ENCODE measurements at regions of chr4 and their contacts with region 1.

Region 1: DNA sequence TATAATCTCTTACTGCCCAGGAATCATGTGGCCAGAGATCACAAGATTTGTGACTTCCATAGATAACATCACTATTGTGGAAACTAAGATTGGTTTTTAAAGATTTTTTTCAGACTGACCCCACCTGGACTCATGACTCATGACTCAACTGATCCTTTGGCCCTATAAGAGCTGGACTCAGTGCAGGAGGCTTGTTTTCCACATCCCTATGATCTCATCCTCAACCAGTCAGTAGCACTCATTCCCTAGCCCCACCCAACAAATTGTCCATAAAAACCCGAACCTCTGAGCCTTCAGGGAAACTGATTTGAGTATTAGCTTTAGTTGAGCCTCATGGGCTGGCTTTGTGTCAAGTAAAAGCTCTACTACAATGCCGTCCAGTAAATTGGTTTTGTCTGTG is 7.9 kb upstream of the NOCT start:
- DNase-seq: no peak
- ATAC-seq: no peak
- H3K4me3 ChIP-seq: no peak overlapping the region
- H3K27ac ChIP-seq: no peak overlapping the region
- H3K4me1 ChIP-seq: 0 out of 2 replicates have a peak, but pooled peaks cover 3% of the 10 kb centered on the region
- H3K27me3 ChIP-seq: no peaks in the 10 kb centered on the region
- CTCF ChIP-seq: no peak

Region 2: DNA sequence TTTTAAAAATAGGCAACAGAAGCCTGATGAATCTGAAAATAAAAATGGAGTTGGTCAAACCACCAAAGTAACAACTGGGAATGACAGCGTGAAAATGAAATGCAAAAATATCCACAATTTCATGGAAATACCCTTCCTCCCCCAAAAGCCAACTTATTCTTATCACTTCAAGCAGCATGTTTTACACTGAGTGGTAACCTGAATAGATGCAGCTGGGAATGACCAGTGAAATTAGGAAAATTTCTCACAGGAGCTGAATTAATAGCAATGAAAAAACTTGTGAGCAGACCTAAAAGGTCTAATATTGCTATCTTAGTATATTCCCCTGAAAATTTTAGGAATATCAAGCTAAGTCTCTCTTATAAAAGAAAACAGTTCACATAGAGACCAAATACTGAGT is 1714.4 kb before region 1 on chr4:
- CTCF ChIA-PET with region 1: no interaction called
- POLR2A ChIA-PET with region 1: interaction called, 16 read pairs
- in situ Hi-C with region 1: no loop called
- intact Hi-C with region 1: no loop called
- DNase-seq: no peak
- ATAC-seq: no peak
- H3K4me3 ChIP-seq: no peak overlapping the region
- H3K27ac ChIP-seq: 0 out of 2 replicates have a peak overlapping the region, but pooled peaks have one; percentile 23
- H3K4me1 ChIP-seq: no peaks in the 10 kb centered on the region; the same call in 1 of the 2 replicates
- H3K27me3 ChIP-seq: no peaks in the 10 kb centered on the region
- CTCF ChIP-seq: no peak

Region 3: DNA sequence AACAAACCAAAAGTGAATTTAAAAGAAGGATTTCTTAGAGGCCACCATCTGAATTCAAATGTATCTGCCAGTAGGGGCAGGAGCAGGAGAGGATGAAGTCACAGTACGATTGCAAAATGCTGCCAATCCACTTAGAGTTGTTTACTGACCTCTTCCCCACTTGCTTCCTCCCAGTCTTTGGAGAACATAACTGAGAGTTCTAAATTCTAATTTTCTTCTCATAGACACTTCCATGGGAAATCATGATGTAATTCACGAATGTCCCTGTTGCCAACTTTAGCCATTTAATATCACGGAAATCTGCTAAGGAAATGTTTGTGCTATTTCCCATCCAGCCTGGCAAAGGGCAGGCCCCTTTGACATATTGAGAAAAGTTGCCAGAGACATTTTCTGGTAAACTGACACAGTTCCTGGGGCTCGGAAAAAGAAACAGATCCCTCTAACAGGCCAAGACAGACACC is 25.7 kb before region 1 on chr4:
- CTCF ChIA-PET with region 1: no interaction called
- POLR2A ChIA-PET with region 1: interaction called, 13 read pairs
- in situ Hi-C with region 1: no loop called
- intact Hi-C with region 1: no loop called
- DNase-seq: no peak
- ATAC-seq: no peak
- H3K4me3 ChIP-seq: no peak overlapping the region
- H3K27ac ChIP-seq: no peak overlapping the region
- H3K4me1 ChIP-seq: peaks cover 3% of the 10 kb centered on the region; the same call in 1 of the 2 replicates
- H3K27me3 ChIP-seq: no peaks in the 10 kb centered on the region
- CTCF ChIP-seq: no peak

Region 4: DNA sequence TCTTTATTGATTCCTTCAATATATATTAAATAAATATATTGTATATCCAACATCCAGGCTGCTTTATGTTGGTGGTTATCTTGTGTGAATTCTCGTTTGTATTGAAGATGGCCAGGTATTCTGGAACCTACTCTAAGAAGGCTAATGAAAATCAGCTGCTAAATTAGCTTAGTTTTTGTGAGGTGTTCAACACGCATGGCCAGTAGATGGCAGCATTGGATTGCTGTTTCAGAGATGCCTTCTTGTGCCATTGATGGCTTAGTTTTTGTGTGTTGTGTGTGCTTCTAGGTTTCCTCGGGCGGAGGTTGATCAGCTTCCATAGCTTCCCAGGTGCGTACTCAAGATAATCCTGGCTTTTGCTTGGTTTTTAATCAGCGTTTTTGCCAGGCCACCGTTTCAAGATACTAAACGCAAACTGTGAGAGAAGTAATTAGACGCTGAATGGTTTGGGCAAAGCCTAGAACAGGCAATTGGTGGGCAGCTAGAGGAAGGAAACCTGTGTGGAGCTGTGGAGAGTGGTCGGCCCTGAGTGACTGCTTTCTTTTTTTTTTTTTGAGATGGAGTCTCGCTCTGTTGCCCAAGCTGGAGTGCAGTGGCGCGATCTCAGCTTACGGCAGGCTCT is 23.1 kb after region 1 on chr4:
- CTCF ChIA-PET with region 1: no interaction called
- POLR2A ChIA-PET with region 1: no interaction called
- in situ Hi-C with region 1: no loop called
- intact Hi-C with region 1: no loop called
- DNase-seq: peak; percentile 54
- ATAC-seq: peak; percentile 51; the same call in 1 of the 2 replicates
- H3K4me3 ChIP-seq: no peak overlapping the region
- H3K27ac ChIP-seq: no peak overlapping the region
- H3K4me1 ChIP-seq: peaks cover 14% of the 10 kb centered on the region
- H3K27me3 ChIP-seq: no peaks in the 10 kb centered on the region
- CTCF ChIP-seq: peak; percentile 78

Region 5: DNA sequence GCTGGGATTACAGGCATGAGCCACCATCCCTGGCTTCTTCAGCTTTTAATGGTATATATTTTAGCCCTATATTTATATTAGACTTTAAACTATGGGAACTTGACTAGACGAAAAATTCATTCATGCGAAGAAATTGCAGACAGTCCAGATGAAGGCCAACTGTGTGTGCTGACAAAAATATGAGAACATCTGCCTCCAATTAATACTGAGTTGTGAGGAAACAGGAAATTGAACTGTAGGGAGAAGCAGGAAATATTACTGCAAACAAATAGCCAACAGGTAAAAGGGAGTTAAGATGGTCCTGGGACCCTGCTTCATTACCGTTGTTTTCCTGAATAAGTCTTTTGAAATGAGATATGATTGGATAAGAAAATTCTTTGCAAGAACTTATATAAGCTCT is 246.1 kb after region 1 on chr4:
- CTCF ChIA-PET with region 1: no interaction called
- POLR2A ChIA-PET with region 1: no interaction called
- in situ Hi-C with region 1: no loop called
- intact Hi-C with region 1: no loop called
- DNase-seq: no peak
- ATAC-seq: no peak
- H3K4me3 ChIP-seq: no peak overlapping the region
- H3K27ac ChIP-seq: no peak overlapping the region
- H3K4me1 ChIP-seq: no peaks in the 10 kb centered on the region
- H3K27me3 ChIP-seq: no peaks in the 10 kb centered on the region
- CTCF ChIP-seq: no peak